ENCODE measurements at regions of chr7 and their contacts with region 1.

Region 1: DNA sequence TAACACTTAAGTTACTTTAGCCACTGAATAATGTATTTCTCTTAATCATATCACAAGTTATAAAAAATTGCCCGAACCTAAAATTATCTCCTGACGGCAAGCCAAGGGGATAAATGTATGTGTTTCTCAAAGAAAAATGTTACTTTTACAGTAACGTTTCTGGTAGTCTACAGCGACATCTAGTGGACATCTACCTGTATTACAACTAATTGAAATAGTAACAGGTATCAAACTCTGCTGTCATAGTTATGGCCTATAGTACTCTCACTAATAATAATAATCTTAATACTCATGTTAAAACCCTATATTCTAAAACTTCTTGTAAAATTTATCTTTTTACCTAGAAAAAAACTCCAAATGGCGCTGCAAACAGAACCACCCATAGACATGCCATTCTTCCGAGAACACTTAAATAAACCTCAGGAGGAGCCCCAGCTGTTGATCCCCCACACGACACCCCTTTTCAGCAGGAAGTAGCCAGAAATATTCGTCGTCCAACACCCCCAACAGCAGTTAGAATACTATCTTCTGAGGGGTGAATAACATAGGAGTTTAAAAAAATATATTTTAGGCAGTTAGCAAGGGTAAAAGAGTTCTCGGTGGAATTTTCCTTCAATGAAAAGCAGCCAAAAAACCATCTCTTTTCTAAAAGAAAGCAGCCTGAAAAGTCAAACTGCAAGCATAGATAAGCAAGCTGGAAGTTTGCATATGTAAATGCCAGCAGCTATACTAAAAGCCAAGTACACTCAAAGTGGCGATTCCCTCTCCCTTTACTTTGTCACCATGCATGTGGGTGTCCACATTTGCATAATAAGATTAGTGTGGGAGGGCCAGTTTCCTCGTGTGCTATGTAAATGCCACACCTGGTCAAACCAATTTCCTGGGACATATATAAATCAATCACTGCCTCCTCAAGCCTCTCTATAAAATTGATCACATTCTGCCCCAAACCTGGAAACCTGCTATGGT is 40.5 kb upstream of the ZNF107 start:
- DNase-seq: peak; percentile 44
- ATAC-seq: peak; percentile 54
- H3K4me3 ChIP-seq: no peak overlapping the region
- H3K4me3 Mint-ChIP-seq: no peak overlapping the region
- H3K27ac ChIP-seq: no peak overlapping the region
- H3K27ac Mint-ChIP-seq: no peak overlapping the region
- H3K4me1 ChIP-seq: no peaks in the 10 kb centered on the region
- H3K4me1 Mint-ChIP-seq: peaks cover 4% of the 10 kb centered on the region
- H3K27me3 ChIP-seq: no peaks in the 10 kb centered on the region
- H3K27me3 Mint-ChIP-seq: no peaks in the 10 kb centered on the region
- CTCF ChIP-seq: peak; percentile 98

Region 2: GRCh38 chr7:64045301-64046040 is 579.9 kb before region 1 on chr7 and contains the start of gene ZNF727:
- CTCF ChIA-PET with region 1: no interaction called
- POLR2A ChIA-PET with region 1: no interaction called
- intact Hi-C with region 1: loop called (anchors 10 kb)
- DNase-seq: peak; percentile 58
- ATAC-seq: peak; percentile 31
- H3K4me3 ChIP-seq: peak within 1 kb of the TSS in 4 of 5 experiments; percentile 29 to 48 (median 43)
- H3K4me3 Mint-ChIP-seq: peak within 1 kb of the TSS; percentile 59
- H3K27ac ChIP-seq: peak within 1 kb of the TSS in 1 of 2 donors; percentile 53
- H3K27ac Mint-ChIP-seq: no peak within 1 kb of the TSS
- H3K4me1 ChIP-seq: no peaks in the 10 kb centered on the region
- H3K4me1 Mint-ChIP-seq: no peaks in the 10 kb centered on the region
- H3K27me3 ChIP-seq: no peaks in the 10 kb centered on the region
- H3K27me3 Mint-ChIP-seq: no peaks in the 10 kb centered on the region
- CTCF ChIP-seq: no peak
- total RNA-seq, gene ZNF727: 0.83 and 1.2 TPM in 2 replicates